GM10248 (cell line): ENCODE measurements at regions of chr6 and their contacts with region 1.

Region 1: DNA sequence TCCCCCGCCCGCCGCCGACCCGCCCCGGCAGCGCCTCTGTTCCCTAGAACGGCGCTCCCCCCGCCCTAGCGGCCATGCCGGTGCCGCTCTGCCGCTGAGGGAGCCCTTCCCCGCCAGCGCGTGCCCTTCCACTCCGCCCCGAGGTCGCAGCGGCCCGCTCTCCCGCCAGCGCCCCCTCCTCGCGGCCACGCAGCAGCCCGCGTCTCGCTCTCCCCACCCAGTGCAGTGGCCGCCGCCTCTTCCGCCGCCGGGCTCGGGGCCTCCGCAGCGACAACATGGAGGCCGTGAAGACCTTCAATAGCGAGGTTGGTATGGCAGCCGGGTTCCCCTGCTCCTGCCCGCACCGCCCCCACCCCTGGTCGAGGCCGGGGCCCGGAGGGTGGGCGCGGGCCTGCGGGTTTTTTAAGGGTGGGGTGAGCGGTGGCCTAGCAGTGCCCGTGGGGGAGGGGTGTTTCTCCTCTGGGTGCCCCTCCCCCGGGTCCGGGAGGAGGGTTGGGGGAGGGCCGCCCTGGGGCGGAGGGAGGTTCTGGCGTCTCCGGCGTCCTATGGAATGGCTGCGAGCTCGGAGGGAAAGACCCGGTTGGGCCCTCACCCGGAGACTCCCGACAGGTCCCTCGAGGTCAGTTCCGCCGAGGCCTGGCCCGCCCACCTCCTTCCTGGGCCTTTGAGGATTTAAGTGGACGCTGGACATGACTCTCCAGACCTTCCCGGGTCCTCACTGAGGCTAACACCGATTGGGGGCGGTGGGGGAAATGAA is 588 bp downstream of the SCAF8 start:
- DNase-seq: peak; percentile 95
- CTCF ChIP-seq: peak; percentile 5

Region 2: DNA sequence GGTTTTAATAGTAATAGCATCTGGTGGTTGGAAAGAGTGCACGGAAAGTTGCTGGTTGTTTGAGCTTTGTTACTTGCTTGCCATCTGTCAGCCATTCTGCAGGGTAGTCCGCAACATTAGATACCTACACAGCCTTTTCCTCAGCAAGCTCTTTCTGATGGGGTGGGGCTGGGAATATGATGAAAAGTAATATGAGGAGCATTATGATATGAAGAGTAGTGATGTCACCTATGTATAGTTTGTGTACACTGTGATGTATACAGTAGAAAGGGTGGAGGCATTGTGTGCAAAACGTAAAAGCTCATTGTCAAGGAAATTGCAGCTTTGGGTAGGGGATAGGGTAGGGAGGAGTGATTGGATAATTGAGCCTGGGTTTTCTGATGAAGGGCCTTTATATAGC is 15.5 kb after region 1 on chr6:
- CTCF ChIA-PET with region 1: interaction called, 10 read pairs
- POLR2A ChIA-PET with region 1: no interaction called
- DNase-seq: no peak
- CTCF ChIP-seq: no peak